ENCODE measurements at regions of chr1 and their contacts with region 1.

Region 1: GRCh38 chr1:58687516-58687915 is 12.3 kb downstream of the MYSM1 start:
- DNase-seq: no peak
- ATAC-seq: no peak
- H3K4me3 Mint-ChIP-seq: no peak overlapping the region
- H3K27ac Mint-ChIP-seq: no peak overlapping the region
- H3K4me1 Mint-ChIP-seq: no peaks in the 10 kb centered on the region
- H3K27me3 Mint-ChIP-seq: no peaks in the 10 kb centered on the region

Region 2: GRCh38 chr1:58670181-58670580 is 17.3 kb before region 1 on chr1:
- CTCF ChIA-PET with region 1: no interaction called
- POLR2A ChIA-PET with region 1: no interaction called
- intact Hi-C with region 1: loop called in 1 of 2 experiments (anchors 2 kb)
- DNase-seq: no peak
- ATAC-seq: no peak
- H3K4me3 Mint-ChIP-seq: no peak overlapping the region
- H3K27ac Mint-ChIP-seq: peak overlapping the region; percentile 65
- H3K4me1 Mint-ChIP-seq: no peaks in the 10 kb centered on the region
- H3K27me3 Mint-ChIP-seq: no peaks in the 10 kb centered on the region